ENCODE measurements at regions of chr3 and their contacts with region 1.

Region 1: DNA sequence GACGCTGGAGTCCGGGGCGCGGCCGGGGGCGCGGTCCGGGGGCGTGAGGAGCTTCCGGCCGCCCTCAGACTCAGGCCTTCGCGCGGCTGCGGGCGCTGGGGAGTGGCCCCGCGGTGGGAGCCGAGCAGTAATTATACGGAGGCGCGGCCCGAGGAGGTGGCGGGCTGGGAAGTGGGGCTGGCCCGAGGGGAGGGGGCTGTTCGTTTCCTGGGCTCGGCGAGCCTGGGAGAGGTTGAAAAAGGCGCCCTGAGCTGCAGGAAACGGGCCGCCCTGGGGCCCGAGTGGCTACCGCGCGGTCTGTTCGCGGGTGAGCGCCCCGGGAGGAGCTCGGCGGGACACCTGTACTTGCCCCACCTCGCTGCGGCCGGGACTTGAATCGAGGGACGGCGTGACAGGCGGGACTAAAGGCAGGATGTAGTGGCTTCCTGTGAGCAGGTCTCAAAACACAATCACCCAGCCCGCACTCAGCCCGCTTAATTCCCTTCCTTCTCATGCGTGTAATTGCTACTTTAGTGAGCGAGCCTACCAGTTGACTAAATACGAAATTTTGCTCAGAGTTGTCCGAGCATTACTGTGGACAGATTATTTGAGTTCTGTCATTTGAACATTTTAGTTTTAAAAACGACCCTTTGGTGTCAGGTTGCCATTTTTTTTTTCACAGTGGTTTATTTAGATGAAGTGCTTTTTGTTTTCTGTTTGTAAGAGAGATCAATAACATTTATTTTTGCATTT is 860 bp downstream of the RASA2 start:
- DNase-seq: peak; percentile 94
- H3K4me3 Mint-ChIP-seq: peak overlapping the region; percentile 87
- H3K27ac Mint-ChIP-seq: peak overlapping the region; percentile 96
- H3K4me1 Mint-ChIP-seq: peaks cover 70% of the 10 kb centered on the region
- H3K27me3 Mint-ChIP-seq: no peaks in the 10 kb centered on the region

Region 2: DNA sequence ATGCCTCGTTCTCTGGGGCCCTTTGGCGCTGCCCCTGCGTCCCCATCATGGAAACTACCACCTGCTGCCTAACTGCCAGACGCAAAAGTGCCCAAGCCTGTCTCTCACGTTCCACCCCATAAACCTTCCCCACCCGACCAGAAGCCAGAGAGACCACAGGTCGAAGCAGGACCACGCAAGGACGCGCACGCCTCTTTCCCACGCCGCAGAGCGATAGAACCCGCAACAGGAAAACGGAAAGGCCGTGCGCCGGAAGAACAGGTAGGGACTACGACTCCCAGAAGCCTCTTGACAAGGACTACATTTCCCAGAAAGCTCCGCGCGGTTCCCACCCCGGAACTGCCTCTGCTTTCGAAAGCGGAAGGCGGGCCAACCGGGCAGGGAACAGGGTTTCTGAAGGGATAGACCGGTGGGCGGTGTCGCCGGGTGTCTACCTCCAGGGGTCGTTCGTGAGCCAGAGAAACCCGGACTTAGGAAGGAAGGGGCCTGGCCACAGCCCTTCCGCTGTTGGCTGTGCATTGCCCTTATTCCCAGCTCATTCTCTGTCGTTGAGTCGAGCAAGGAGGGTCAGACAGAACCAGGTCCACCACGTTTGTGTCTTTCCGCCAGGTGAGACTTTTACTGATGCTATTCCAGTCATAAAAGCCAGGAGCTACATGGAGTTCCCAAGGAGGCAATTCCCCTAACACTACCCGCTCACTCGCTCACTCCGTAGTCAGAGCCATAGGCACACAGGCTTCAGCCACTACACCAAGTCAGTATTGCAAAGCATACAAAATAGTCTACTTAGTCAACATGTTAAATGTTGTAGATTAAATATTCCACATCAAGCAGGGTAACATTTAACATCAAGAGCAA is 176.0 kb before region 1 on chr3:
- CTCF ChIA-PET with region 1: no interaction called
- POLR2A ChIA-PET with region 1: interaction called, 17 read pairs
- DNase-seq: peak; percentile 99
- H3K4me3 Mint-ChIP-seq: peak overlapping the region; percentile 93
- H3K27ac Mint-ChIP-seq: peak overlapping the region; percentile 86
- H3K4me1 Mint-ChIP-seq: peaks cover 58% of the 10 kb centered on the region
- H3K27me3 Mint-ChIP-seq: no peaks in the 10 kb centered on the region

Region 3: GRCh38 chr3:141331377-141332318 is 156.0 kb before region 1 on chr3:
- CTCF ChIA-PET with region 1: no interaction called
- POLR2A ChIA-PET with region 1: no interaction called
- DNase-seq: no peak
- H3K4me3 Mint-ChIP-seq: no peak overlapping the region
- H3K27ac Mint-ChIP-seq: no peak overlapping the region
- H3K4me1 Mint-ChIP-seq: peaks cover 7% of the 10 kb centered on the region
- H3K27me3 Mint-ChIP-seq: no peaks in the 10 kb centered on the region

Region 4: DNA sequence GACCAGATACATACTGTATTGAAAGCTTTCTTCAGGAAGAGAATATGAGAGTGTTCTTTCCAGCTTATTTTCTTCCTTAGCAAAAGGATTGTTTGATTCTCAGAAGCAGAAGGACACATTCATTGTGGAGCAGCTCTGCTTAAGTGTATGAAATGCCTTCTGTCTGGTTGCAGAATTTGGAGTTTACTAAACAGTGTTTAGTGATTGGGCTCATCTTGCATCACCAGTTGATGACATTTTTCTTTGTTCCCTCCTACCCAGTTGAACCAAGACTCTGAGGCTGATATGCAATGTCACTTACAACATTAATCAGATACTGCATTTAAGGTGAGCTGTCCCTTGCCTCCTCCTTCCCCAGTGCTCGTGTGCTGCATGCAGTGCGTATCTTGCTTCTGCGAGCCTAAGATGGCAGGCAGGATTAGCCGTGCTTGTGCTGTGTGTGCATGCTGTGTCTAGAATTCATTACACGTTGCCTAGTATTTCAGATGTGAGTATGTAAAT is 101.0 kb before region 1 on chr3:
- CTCF ChIA-PET with region 1: no interaction called
- POLR2A ChIA-PET with region 1: interaction called, 13 read pairs
- DNase-seq: no peak
- H3K4me3 Mint-ChIP-seq: peak overlapping the region; percentile 63
- H3K27ac Mint-ChIP-seq: peak overlapping the region; percentile 65
- H3K4me1 Mint-ChIP-seq: peaks cover 37% of the 10 kb centered on the region
- H3K27me3 Mint-ChIP-seq: no peaks in the 10 kb centered on the region

Region 5: DNA sequence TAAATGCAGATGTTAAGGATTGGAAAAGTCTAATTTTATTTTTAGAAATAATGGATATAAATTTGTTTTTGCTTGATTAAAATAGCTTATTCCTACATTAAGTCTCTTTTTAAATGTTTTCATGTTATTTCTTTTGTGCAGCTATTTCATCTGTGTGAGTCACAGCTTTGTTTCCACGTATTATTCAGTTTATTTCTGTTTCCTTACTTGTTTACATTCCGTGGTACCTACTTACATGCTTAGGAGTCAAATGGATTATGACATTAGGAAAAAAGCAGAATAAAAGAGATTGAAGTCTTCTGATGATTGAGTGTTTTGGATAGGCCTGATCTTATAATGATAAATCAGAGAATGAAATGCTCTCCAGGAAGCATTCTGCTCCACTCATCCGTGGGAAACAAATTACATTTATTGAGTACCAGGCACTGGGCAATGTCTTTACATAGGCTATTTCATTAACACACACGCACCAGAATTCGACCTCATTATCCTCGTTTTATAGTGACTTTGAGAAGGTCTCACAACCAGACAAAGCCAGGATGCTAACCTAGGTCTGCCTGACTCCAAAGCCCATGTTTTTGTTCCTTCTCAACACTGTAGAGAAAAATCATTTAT is 39.0 kb before region 1 on chr3:
- CTCF ChIA-PET with region 1: no interaction called
- POLR2A ChIA-PET with region 1: no interaction called
- DNase-seq: no peak
- H3K4me3 Mint-ChIP-seq: no peak overlapping the region
- H3K27ac Mint-ChIP-seq: no peak overlapping the region
- H3K4me1 Mint-ChIP-seq: peaks cover 3% of the 10 kb centered on the region
- H3K27me3 Mint-ChIP-seq: no peaks in the 10 kb centered on the region

Region 6: DNA sequence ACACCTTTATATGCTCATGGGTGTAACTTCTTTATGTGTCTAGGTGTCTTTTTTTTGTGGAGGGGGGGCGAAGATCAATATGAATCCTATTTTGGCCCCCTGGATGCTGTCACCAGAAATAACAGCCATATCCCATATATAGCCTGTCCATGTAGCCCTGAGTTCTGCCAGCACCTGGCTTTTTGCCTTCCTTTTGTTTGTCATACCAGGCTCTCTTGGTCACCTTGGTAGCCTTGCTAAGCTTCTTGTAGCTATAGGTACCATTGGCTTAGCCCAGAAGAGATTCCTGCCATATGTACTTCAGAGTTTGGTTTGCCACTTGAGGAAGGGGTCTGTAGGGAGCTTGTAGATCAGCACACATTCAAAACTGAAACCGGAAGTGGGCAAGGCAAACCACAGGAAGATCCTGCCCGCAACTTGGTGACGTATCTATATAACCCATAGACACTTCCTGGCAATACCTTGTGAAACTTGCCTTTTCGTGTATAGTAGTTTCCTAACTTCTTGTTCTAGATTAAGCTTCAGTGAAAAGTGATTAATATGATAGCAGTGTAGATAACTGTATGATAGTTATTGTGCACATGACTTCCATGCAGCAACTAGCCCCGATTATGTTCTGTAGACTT is 11.0 kb after region 1 on chr3:
- CTCF ChIA-PET with region 1: interaction called, 11 read pairs
- POLR2A ChIA-PET with region 1: interaction called, 194 read pairs
- DNase-seq: peak; percentile 93
- H3K4me3 Mint-ChIP-seq: peak overlapping the region; percentile 53
- H3K27ac Mint-ChIP-seq: peak overlapping the region; percentile 85
- H3K4me1 Mint-ChIP-seq: peaks cover 70% of the 10 kb centered on the region
- H3K27me3 Mint-ChIP-seq: no peaks in the 10 kb centered on the region

Region 7: DNA sequence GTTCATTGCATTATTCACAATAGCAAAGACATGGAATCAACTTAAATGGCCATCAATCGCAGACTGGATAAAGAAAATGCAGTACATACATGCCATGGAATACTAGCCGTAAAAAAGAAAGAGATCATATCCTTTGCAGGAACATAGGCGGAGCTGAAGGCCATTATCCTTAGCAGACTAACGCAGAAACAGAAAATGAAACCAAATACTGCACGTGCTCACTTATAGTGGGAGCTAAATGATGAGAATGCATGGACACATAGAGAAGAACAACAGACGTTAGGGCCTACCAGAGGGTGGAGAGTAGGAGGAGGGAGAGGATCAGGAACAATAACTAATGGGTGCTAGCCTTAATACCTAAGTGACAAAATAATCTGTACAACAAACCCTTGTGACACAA is 57.0 kb after region 1 on chr3:
- CTCF ChIA-PET with region 1: interaction called, 4 read pairs
- POLR2A ChIA-PET with region 1: interaction called, 14 read pairs
- DNase-seq: no peak
- H3K4me3 Mint-ChIP-seq: peak overlapping the region; percentile 31
- H3K27ac Mint-ChIP-seq: peak overlapping the region; percentile 8
- H3K4me1 Mint-ChIP-seq: peaks cover 42% of the 10 kb centered on the region
- H3K27me3 Mint-ChIP-seq: no peaks in the 10 kb centered on the region

Region 8: GRCh38 chr3:141561426-141562034 is 73.8 kb after region 1 on chr3:
- CTCF ChIA-PET with region 1: interaction called, 8 read pairs
- POLR2A ChIA-PET with region 1: interaction called, 28 read pairs
- DNase-seq: peak; percentile 32
- H3K4me3 Mint-ChIP-seq: no peak overlapping the region
- H3K27ac Mint-ChIP-seq: no peak overlapping the region
- H3K4me1 Mint-ChIP-seq: peaks cover 28% of the 10 kb centered on the region
- H3K27me3 Mint-ChIP-seq: no peaks in the 10 kb centered on the region